ENCODE measurements at regions of chr5 and their contacts with region 1.

Region 1: DNA sequence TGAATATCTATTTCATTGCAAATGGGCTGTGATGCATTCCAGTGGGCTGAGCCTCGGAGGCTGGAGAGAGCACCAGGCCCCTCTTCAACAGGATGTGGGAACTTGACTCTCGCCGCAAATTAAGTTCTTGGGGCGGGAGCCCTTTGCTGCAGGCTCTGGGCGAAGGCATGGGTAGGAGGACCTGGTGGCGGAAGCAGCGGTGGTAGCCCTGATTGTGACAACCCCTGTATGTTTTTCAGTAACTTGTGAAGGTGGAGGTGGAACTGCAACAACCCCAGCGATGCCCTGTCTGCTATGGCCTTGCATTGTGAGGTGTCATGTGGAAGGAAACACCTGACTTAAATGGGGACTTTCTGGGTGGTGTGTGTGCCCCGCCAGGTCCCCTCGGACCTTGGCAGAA is 9.4 kb downstream of the FYB1 start:
- H3K4me3 Mint-ChIP-seq: peak overlapping the region; percentile 2
- H3K27ac Mint-ChIP-seq: peak overlapping the region; percentile 63
- H3K4me1 Mint-ChIP-seq: peaks cover 69% of the 10 kb centered on the region
- H3K27me3 Mint-ChIP-seq: no peaks in the 10 kb centered on the region

Region 2: GRCh38 chr5:39148983-39149534 is 60.9 kb before region 1 on chr5:
- intact Hi-C with region 1: loop called (anchors 5 kb)
- H3K4me3 Mint-ChIP-seq: no peak overlapping the region
- H3K27ac Mint-ChIP-seq: peak overlapping the region; percentile 7
- H3K4me1 Mint-ChIP-seq: peaks cover 60% of the 10 kb centered on the region
- H3K27me3 Mint-ChIP-seq: no peaks in the 10 kb centered on the region

Region 3: GRCh38 chr5:39171647-39172046 is 38.3 kb before region 1 on chr5:
- intact Hi-C with region 1: loop called (anchors 5 kb)
- H3K4me3 Mint-ChIP-seq: no peak overlapping the region
- H3K27ac Mint-ChIP-seq: no peak overlapping the region
- H3K4me1 Mint-ChIP-seq: peaks cover 39% of the 10 kb centered on the region
- H3K27me3 Mint-ChIP-seq: no peaks in the 10 kb centered on the region

Region 4: GRCh38 chr5:39238366-39239105 is 28.6 kb after region 1 on chr5:
- intact Hi-C with region 1: no loop called
- H3K4me3 Mint-ChIP-seq: no peak overlapping the region
- H3K27ac Mint-ChIP-seq: peak overlapping the region; percentile 49
- H3K4me1 Mint-ChIP-seq: peaks cover 14% of the 10 kb centered on the region
- H3K27me3 Mint-ChIP-seq: no peaks in the 10 kb centered on the region

Region 5: DNA sequence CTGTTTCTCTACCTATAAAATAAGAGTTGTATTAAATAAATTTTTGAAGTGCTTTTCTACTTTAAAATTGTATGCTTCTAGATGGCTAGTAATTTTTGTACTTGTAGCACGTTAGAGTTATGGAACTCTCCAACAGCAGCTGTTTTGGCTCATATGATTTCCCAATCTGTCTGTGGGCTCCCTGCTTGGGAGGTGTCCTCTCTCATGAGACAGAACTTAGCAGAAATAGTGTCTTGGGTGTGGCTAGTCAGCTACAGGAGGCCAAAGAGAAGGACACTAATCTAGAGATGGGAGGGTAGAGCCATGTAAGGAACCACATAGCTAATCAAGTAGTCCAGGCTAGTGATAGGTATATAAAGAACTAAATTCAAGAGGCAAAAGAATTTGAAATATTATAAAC is 293.2 kb after region 1 on chr5:
- intact Hi-C with region 1: no loop called
- H3K4me3 Mint-ChIP-seq: no peak overlapping the region
- H3K27ac Mint-ChIP-seq: peak overlapping the region; percentile 63
- H3K4me1 Mint-ChIP-seq: peaks cover 57% of the 10 kb centered on the region
- H3K27me3 Mint-ChIP-seq: peaks cover 5% of the 10 kb centered on the region